Activated CD4-positive, alpha-beta memory T cell treated with anti-CD3 and anti-CD28 coated beads for 36 hours (primary cell): ENCODE measurements at regions of chr7 and their contacts with region 1.

Region 1: DNA sequence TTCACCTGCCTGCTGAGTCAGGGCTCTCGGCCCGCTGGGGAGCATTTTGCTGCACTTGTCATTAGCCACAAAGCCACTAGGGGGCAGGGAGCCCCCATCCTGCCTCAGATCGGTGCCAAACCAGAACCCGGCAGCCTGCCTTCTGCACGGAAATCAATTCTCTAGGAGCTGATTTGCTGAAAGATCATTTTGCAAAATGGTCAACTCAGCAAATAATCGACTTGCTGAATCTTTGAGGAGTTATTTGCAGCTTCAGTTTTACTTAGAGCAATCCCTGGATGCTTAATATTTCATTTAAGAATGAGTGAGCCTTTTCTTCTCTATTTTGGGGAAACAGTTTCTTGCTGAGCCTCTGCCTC is 1.7 kb upstream of the GIMAP8 start:
- DNase-seq: peak; percentile 94
- H3K4me3 Mint-ChIP-seq: peak overlapping the region; percentile 97
- H3K27ac Mint-ChIP-seq: peak overlapping the region; percentile 98
- H3K4me1 Mint-ChIP-seq: peaks cover 48% of the 10 kb centered on the region
- H3K27me3 Mint-ChIP-seq: no peaks in the 10 kb centered on the region

Region 2: DNA sequence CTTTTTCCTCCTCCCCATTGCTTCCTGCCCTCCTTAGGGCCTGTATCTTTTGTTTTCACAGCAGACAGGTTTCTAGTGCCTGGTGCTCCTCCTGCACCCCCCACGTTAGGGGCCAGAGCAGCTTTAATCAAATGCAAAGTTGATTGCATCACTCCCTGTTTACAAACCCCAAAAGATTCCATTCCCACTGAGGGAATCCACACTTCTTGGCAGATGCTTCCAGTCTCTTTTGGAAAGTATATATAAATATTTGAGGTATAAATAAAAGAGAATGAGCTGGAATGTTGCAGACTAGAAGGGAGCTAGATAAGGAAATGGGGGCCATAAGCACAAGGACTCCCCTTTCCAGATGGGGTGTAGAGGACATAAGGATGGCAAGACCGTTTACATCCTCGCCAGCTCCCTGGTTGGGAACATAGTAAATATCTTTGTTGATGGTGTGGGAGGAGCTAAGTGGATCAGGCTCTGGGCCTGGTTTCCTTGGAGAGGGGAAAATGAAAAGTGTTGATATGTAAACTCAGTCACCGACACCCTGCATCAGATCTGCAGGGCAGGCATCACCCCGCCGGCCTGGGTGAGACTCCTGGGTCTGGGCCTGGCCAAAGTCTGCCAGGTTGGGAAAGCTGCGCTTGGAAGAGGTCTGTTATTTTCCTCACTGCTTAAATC is 113.5 kb before region 1 on chr7:
- CTCF ChIA-PET with region 1: no interaction called
- POLR2A ChIA-PET with region 1: no interaction called
- intact Hi-C with region 1: no loop called
- DNase-seq: no peak
- H3K4me3 Mint-ChIP-seq: no peak overlapping the region
- H3K27ac Mint-ChIP-seq: no peak overlapping the region
- H3K4me1 Mint-ChIP-seq: peaks cover 2% of the 10 kb centered on the region
- H3K27me3 Mint-ChIP-seq: peaks cover 8% of the 10 kb centered on the region

Region 3: DNA sequence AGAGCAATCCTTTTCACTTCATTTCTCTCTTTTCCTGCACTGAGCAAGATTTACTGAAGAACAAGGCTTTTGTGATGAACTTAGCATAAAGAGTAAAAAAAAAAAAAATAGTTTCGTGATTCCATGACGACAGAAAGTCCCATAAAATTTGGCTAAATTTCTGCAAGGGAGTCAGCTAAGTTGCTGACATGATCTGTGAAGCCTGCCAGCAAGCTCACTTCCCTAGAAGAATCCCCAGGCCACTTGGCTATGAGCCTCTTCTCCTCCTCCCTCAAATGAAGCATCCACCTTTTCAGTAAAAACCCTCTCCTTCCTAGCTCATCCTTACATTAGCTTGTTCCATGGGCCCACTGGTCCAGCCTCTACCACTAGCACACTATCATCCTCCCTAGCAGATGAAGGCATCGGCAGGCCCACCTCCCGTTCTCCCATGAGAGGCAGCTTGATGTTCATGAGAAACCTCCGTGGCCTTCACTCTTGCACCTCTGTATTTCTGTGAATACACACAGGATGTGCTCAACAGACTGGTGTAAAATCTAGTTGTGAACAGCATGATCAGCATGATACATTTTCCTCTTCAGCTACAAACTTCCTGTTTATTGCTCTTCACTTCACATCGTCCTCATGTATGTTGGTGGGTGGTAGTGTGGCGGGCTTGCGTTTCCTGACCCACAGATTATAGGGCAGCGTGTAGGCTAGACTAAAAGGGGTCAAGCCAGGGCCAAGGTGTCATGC is 32.6 kb after region 1 on chr7:
- CTCF ChIA-PET with region 1: interaction called, 9 read pairs
- POLR2A ChIA-PET with region 1: interaction called, 32 read pairs
- intact Hi-C with region 1: loop called (anchors 1 kb)
- DNase-seq: peak; percentile 63
- H3K4me3 Mint-ChIP-seq: peak overlapping the region; percentile 83
- H3K27ac Mint-ChIP-seq: peak overlapping the region; percentile 99
- H3K4me1 Mint-ChIP-seq: peaks cover 94% of the 10 kb centered on the region
- H3K27me3 Mint-ChIP-seq: no peaks in the 10 kb centered on the region

Region 4: DNA sequence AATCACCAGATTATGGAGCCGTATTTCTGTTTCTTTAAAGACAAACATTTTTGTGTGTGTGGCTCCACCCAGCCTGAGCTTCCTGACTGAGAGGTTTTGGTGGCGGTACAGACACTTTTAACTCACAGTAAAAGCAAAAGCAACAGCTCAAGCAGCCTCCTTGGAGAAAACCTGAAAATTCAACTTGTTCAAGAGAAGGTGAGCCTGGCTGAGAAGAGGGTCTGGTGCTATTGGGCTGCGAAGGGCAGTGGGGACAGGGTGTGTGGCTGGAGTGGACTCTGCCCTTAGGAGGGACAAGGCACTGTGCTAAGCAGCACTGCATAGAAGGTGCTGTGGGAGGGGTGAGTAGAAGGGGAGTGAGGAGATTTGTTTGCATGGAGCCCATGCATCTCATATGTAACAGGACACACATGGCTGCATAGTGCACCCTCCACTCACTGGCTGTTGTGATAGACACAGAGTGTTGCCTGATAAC is 66.0 kb after region 1 on chr7 and contains the start of gene GIMAP7:
- CTCF ChIA-PET with region 1: interaction called, 71 read pairs
- POLR2A ChIA-PET with region 1: interaction called, 78 read pairs
- intact Hi-C with region 1: loop called (anchors 1 kb)
- DNase-seq: peak; percentile 73
- H3K4me3 Mint-ChIP-seq: peak within 1 kb of the TSS; percentile 94
- H3K27ac Mint-ChIP-seq: peak within 1 kb of the TSS; percentile 97
- H3K4me1 Mint-ChIP-seq: peaks cover 52% of the 10 kb centered on the region
- H3K27me3 Mint-ChIP-seq: no peaks in the 10 kb centered on the region
- total RNA-seq, gene GIMAP7: 42.5 to 44.1 TPM

Region 5: GRCh38 chr7:150567169-150567568 is 118.4 kb after region 1 on chr7 and contains the start of gene GIMAP4:
- CTCF ChIA-PET with region 1: interaction called, 33 read pairs
- POLR2A ChIA-PET with region 1: interaction called, 27 read pairs
- intact Hi-C with region 1: loop called (anchors 1 kb)
- DNase-seq: peak; percentile 55
- H3K4me3 Mint-ChIP-seq: peak within 1 kb of the TSS; percentile 94
- H3K27ac Mint-ChIP-seq: peak within 1 kb of the TSS; percentile 98
- H3K4me1 Mint-ChIP-seq: peaks cover 65% of the 10 kb centered on the region
- H3K27me3 Mint-ChIP-seq: no peaks in the 10 kb centered on the region
- total RNA-seq, gene GIMAP4: 128 to 140 TPM

Region 6: DNA sequence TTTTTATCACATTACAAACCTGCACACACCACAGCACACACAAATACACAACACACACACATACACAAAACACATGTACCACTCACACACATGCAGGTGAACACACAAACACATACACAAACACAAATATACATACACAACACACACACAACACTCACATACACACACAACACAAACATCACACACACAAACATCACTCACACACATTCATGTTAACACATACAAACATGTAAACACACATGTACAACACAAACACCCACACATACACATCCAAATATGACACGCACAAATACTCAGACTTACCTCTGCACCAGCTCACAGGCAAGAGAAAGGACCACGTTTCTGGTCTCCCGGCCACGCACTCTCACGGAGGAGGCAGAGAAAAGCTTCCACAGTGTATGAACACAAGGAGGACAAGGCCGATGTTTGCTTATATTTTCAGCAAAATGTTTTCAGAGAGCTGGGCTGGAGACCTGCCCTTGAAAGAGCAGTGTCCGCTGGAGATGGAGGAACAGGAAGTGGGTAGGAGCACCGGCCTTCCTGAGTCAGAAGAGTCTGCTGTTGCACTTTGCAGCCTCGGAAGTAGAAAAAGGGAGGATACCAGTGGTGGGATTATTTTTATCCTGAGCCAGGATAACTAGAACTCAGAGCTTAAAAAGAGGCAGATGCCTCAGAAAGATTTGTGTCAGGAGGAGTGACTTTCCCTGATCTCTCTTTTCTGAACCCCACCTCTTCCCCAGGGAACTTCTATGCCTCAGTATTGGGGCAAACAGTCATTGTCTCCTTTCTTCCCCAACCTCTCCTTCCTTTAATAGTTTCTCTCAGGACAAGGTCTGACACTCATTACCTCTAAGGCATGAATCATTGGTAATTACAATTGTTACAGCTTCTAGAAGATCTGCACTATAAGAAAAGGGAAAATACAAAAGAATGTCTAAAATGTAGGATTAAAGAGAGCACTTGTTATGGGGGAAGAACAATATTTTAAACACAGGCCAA is 183.4 kb after region 1 on chr7 and contains the start of gene GIMAP6:
- CTCF ChIA-PET with region 1: interaction called, 11 read pairs
- POLR2A ChIA-PET with region 1: interaction called, 8 read pairs
- intact Hi-C with region 1: no loop called
- DNase-seq: peak; percentile 62
- H3K4me3 Mint-ChIP-seq: peak within 1 kb of the TSS; percentile 93
- H3K27ac Mint-ChIP-seq: peak within 1 kb of the TSS; percentile 97
- H3K4me1 Mint-ChIP-seq: peaks cover 76% of the 10 kb centered on the region
- H3K27me3 Mint-ChIP-seq: no peaks in the 10 kb centered on the region
- total RNA-seq, gene GIMAP6: 28.9 to 30.2 TPM

Region 7: GRCh38 chr7:150685219-150686029 is 236.7 kb after region 1 on chr7 and contains the start of gene GIMAP2:
- CTCF ChIA-PET with region 1: interaction called, 6 read pairs
- POLR2A ChIA-PET with region 1: interaction called, 5 read pairs
- intact Hi-C with region 1: loop called (anchors 2 kb)
- DNase-seq: peak; percentile 40
- H3K4me3 Mint-ChIP-seq: peak within 1 kb of the TSS; percentile 98
- H3K27ac Mint-ChIP-seq: peak within 1 kb of the TSS; percentile 99
- H3K4me1 Mint-ChIP-seq: peaks cover 77% of the 10 kb centered on the region
- H3K27me3 Mint-ChIP-seq: no peaks in the 10 kb centered on the region
- total RNA-seq, gene GIMAP2: 38.8 to 44.1 TPM

Region 8: DNA sequence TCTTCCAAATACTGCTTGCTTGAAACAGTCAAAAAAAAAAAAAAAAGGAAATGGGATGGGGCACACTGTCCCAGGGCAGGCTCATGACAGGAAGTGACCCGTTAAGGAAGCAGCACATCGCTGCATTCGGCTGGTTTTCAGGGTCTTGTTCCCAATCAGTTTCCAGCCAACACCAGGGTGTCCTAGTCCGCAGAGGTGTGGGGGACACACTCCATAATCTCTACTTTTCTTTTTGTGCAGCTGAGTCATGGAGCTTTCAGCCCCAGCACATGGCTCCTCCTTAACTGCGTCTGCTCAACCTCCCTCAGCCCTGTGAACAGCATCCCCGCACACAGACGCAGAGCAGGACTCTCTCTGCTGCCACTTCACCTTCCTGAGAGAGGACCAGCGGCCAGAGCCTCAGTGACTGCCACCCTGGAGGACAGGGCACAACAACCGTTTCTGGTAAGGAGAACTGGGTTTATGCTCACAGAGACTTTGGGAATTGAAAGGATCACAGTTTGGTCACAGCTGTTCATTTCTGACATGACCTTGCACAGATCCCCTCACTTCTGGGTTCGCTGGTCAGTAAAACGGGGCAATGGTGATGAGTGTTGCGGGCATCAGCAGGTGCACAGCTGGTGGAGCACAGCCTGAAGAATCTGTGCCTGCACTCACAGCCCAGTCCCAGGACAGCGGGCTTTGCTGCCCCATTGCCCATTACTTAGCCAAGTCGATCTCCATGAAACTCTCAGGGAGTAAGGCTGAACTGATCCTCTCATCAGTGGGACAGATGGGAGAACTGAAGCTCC is 288.7 kb after region 1 on chr7 and contains the start of gene GIMAP5:
- CTCF ChIA-PET with region 1: interaction called, 16 read pairs
- POLR2A ChIA-PET with region 1: interaction called, 8 read pairs
- intact Hi-C with region 1: loop called (anchors 2 kb)
- DNase-seq: peak; percentile 77
- H3K4me3 Mint-ChIP-seq: peak within 1 kb of the TSS; percentile 87
- H3K27ac Mint-ChIP-seq: peak within 1 kb of the TSS; percentile 97
- H3K4me1 Mint-ChIP-seq: peaks cover 72% of the 10 kb centered on the region
- H3K27me3 Mint-ChIP-seq: no peaks in the 10 kb centered on the region
- total RNA-seq, gene GIMAP5: 45.9 to 48.3 TPM

Region 9: DNA sequence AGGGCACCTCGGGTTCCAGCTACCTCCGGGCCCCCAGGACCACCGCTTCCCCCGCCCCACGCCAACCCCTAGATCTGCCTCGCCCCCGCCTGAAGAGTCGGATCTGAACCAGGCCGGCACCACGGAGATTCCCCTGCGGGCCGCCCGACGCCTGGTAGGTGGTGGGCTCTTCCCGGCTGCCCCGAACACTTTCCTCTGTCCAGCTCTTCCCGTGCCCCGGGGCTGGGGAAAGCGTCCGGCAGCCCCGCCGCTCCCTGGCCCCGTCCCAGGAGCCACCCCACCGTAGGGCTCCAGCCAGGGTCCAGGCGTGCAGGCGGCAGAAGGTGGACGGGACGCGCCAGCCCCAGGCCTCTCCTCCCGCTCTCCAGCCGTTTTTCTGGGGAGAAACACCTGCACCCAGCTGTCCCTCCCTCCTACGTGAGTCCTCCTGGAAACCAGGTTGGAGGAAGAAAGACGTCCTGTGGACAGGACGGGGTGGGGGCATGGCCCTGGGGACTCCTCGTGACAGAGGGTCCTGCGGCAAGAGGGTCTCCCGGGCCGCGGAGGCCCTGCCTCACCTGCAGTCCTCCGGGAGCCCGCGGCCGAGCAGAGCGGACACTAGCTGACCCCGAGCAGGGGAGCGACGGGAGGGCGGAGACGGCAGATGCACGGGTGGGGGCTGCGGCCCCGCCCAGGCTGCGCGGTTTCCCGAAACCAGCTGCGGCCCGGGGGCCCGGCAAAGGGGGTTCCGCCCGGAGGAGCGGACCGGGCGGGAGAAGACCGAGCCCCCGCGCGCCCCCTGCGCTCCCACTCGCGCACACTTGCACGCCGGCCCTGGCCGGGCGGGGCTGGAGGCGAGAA is 351.2 kb after region 1 on chr7 and contains the start of gene TMEM176B:
- CTCF ChIA-PET with region 1: no interaction called
- POLR2A ChIA-PET with region 1: no interaction called
- intact Hi-C with region 1: no loop called
- DNase-seq: no peak
- H3K4me3 Mint-ChIP-seq: peak within 1 kb of the TSS; percentile 55
- H3K27ac Mint-ChIP-seq: no peak within 1 kb of the TSS
- H3K4me1 Mint-ChIP-seq: peaks cover 5% of the 10 kb centered on the region
- H3K27me3 Mint-ChIP-seq: peaks cover 41% of the 10 kb centered on the region
- total RNA-seq, gene TMEM176B: not detected